ENCODE measurements at regions of chr2 and their contacts with region 1.

Region 1: DNA sequence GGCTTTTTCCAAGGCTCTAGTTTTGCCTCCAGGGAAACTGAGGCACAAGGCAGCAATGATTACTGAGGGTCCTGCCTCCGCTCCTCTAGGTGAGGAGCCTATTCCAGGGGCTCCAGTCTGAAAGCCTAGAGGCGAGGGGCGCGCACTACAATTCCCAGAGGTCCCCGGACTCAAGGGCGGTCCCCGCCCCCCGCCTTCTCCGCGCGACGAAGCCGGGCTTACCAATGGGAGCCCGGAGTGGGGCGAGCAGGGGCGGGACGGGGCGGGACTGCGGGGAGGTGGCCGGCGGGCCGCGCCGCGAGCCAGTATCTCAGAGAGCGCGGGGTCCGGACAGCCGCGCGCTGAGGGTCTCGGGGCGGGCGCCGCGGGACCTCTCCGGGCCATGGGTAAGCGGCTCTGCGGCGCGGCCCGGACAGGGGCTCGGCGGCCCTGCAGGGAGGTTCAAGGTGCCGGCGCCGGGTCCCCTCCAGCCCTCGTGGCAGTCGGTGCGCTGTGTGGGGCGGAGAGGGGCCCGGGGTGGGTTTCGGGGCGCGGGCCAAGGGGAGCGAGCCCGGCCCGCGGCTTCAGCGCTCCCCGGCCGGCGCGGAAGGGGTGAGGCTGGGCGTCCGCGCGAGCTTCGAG is at the start of gene ARID5A:
- DNase-seq: peak; percentile 86
- H3K4me3 Mint-ChIP-seq: peak within 1 kb of the TSS; percentile 91
- H3K27ac Mint-ChIP-seq: peak within 1 kb of the TSS; percentile 88
- H3K4me1 Mint-ChIP-seq: peaks cover 74% of the 10 kb centered on the region
- H3K27me3 Mint-ChIP-seq: peaks cover 1% of the 10 kb centered on the region
- total RNA-seq, gene ARID5A: 233 and 240 TPM in 2 replicates

Region 2: DNA sequence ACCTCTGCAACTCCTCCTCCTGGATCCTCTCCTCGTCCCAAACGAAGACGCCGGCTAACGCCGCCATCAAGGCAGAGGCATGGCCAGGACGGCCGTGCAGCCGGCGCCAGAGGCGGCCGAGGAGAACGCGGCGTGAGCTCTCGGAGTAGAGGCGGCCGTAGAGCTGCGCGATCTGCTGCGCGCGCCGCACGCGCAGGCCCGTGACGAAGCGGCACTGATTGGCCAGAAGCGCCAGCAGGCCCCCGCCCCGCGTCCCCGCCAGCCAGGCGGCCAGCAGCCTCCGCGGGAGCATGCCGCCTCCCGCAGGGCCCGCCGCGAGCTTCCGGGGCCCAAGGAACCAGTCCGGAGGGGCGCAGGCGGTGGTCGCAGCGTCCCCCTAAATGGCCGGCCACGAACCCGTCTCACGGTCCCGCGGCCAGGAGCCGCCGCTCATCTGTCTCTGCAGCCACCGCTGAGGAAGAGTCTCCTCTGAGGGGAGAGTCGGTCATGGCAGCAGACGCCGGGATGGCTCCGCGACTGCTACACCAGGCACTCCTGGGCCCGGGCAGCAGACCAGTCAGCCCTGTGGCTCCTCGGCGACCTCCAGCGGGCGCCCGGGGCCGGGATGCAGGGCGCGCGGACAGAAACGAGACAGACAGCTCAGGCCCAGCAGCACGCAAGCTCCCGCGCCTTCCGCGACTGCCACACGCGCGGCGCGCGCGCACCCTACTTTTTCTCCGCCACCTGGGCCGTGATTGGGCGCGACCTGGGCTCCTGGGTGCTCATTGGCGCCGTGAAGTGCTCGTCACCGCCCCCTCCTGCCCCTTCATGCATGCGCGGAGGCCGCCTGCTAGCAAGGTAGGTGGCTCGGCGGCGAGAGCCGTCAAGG is 328.2 kb before region 1 on chr2 and contains the start of gene STARD7:
- intact Hi-C with region 1: loop called (anchors 1 kb)
- DNase-seq: peak; percentile 98
- H3K4me3 Mint-ChIP-seq: peak within 1 kb of the TSS; percentile 96
- H3K27ac Mint-ChIP-seq: peak within 1 kb of the TSS; percentile 94
- H3K4me1 Mint-ChIP-seq: peaks cover 57% of the 10 kb centered on the region
- H3K27me3 Mint-ChIP-seq: no peaks in the 10 kb centered on the region
- total RNA-seq, gene STARD7: 216 and 229 TPM in 2 replicates

Region 3: GRCh38 chr2:96320728-96321622 is 215.6 kb before region 1 on chr2:
- intact Hi-C with region 1: loop called (anchors 5 kb)
- DNase-seq: peak; percentile 26
- H3K4me3 Mint-ChIP-seq: peak overlapping the region; percentile 88
- H3K27ac Mint-ChIP-seq: peak overlapping the region; percentile 85
- H3K4me1 Mint-ChIP-seq: peaks cover 63% of the 10 kb centered on the region
- H3K27me3 Mint-ChIP-seq: no peaks in the 10 kb centered on the region

Region 4: GRCh38 chr2:96374211-96374951 is 162.2 kb before region 1 on chr2:
- intact Hi-C with region 1: no loop called
- DNase-seq: no peak
- H3K4me3 Mint-ChIP-seq: no peak overlapping the region
- H3K27ac Mint-ChIP-seq: no peak overlapping the region
- H3K4me1 Mint-ChIP-seq: no peaks in the 10 kb centered on the region
- H3K27me3 Mint-ChIP-seq: no peaks in the 10 kb centered on the region

Region 5: DNA sequence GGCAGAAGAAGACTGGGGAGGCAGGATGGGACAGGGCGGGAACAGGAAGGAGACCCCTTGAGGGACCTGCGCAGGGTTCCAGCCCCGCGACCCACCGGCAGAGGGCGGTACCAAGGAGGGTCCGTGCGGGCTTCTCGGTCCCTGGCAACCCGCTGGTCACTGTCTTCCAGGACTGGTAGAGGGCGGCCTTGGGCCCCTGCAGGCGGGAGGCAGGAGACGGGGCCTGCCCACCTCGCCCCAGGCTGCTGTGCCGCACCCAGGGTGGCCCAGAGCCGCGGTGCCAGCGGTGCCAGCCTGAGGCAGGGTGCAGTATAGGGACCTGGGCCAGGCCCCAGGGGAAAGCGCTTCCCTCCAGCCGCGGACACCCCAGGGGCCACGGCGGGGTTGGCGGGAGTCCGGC is 65.9 kb before region 1 on chr2:
- intact Hi-C with region 1: no loop called
- DNase-seq: peak; percentile 28
- H3K4me3 Mint-ChIP-seq: peak overlapping the region; percentile 2
- H3K27ac Mint-ChIP-seq: no peak overlapping the region
- H3K4me1 Mint-ChIP-seq: peaks cover 16% of the 10 kb centered on the region
- H3K27me3 Mint-ChIP-seq: peaks cover 4% of the 10 kb centered on the region

Region 6: DNA sequence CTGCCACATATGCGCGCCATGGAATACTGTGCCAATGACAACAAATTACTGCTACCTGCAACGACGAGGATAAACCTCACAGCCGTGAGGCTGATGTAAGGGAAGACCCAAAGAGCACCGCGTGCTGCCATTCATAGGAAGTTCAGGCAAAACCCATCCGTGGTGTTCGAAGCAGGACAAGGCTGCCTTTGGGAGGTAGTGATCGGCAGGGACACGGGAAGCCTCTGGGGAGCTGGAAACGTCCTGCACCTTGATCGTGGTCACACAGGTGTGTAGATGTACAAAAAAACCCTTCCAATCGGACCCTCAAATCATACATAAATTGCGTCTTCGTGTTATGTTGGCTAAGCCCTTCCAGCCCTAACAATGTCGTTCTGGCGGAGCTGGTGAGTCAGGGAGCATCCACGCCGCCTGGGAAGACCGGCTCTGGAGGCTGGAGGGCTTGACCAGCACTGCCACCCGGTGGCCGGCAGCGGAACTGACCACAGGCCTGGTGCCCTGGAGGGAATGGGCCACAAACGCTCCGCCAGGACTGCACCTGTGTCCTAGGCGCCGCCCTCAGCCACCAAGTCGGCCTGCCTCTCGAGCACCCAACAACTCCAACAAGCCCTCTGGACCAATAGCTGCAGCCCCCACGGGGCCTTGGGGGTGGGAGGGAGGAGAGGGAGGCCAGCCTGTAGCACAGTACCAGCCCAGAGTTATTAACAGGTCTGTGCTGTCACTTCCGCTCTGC is 27.3 kb before region 1 on chr2:
- intact Hi-C with region 1: loop called (anchors 2 kb)
- DNase-seq: peak; percentile 46
- H3K4me3 Mint-ChIP-seq: peak overlapping the region; percentile 26
- H3K27ac Mint-ChIP-seq: no peak overlapping the region
- H3K4me1 Mint-ChIP-seq: peaks cover 57% of the 10 kb centered on the region
- H3K27me3 Mint-ChIP-seq: peaks cover 3% of the 10 kb centered on the region

Region 7: GRCh38 chr2:96565111-96565510 is 28.6 kb after region 1 on chr2:
- intact Hi-C with region 1: no loop called
- DNase-seq: no peak
- H3K4me3 Mint-ChIP-seq: no peak overlapping the region
- H3K27ac Mint-ChIP-seq: no peak overlapping the region
- H3K4me1 Mint-ChIP-seq: no peaks in the 10 kb centered on the region
- H3K27me3 Mint-ChIP-seq: peaks cover 7% of the 10 kb centered on the region

Region 8: GRCh38 chr2:96638144-96639121 is 101.9 kb after region 1 on chr2 and contains the start of gene KANSL3:
- intact Hi-C with region 1: loop called (anchors 1 kb)
- DNase-seq: peak; percentile 90
- H3K4me3 Mint-ChIP-seq: peak within 1 kb of the TSS; percentile 98
- H3K27ac Mint-ChIP-seq: peak within 1 kb of the TSS; percentile 97
- H3K4me1 Mint-ChIP-seq: peaks cover 39% of the 10 kb centered on the region
- H3K27me3 Mint-ChIP-seq: peaks cover 9% of the 10 kb centered on the region
- total RNA-seq, gene KANSL3: 51.8 and 55.0 TPM in 2 replicates

Region 9: GRCh38 chr2:96816128-96816835 is 279.7 kb after region 1 on chr2 and contains the start of gene CNNM3:
- intact Hi-C with region 1: loop called (anchors 5 kb)
- DNase-seq: peak; percentile 97
- H3K4me3 Mint-ChIP-seq: peak within 1 kb of the TSS; percentile 93
- H3K27ac Mint-ChIP-seq: peak within 1 kb of the TSS; percentile 91
- H3K4me1 Mint-ChIP-seq: peaks cover 54% of the 10 kb centered on the region
- H3K27me3 Mint-ChIP-seq: no peaks in the 10 kb centered on the region
- total RNA-seq, gene CNNM3: 26.1 and 31.4 TPM in 2 replicates

Measured in activated T-helper 1 cell treated with anti-CD3 and anti-CD28 coated beads, Interleukin-12 subunit alpha, Interleukin-12 subunit beta, Interleukin-2, Interleukin-4 antibody, amounts not matched to agents 30 ng/mL and 10 ng/mL and 1 ng/mL, durations not matched to agents 14 hours and 24 hours and 36 hours (primary cell).